Caco-2 (cell line): ENCODE measurements at regions of chr21 and their contacts with region 1.

Region 1: DNA sequence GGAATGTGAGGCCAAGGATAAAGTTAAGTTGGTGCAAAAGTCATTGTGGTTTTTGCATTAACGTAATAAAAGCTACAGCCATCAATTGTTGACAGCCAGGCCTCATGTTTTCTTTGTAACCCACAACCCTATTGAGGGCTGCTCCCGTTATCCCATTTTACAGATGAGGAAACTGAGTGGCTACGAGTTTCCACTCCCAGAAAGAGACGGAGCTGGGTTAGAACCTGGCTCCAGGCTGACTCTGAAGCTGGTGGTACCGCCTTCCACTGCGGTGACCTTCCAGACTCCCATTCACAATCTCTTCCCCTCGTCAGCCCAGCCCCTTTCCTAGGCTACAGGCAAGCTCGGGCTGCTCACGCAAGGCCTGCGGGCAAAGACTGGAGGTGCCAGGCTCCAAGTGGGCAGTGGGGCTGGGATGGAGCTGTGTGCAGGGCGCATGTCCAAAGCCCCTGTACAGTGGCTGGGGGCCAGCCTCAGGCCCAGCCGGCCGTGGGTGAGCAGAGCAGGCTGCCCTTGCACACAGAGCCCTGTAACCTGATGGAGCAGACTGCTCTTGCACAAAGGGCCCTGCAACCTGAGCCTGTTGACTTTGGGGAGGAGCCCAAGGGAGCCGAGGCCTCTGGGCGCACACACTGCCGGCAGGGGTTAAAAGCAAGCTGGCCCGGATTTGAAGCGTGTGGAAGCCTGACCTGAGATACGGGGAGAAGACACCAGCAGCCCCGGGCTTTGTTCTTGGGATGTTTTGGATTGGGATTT is 97.4 kb upstream of the TMPRSS2 start:
- DNase-seq: peak; percentile 74 to 80
- H3K4me3 ChIP-seq: no peak overlapping the region
- H3K4me3 Mint-ChIP-seq: no peak overlapping the region
- H3K27ac Mint-ChIP-seq: peak overlapping the region; percentile 69
- H3K4me1 ChIP-seq: peaks cover 46% of the 10 kb centered on the region
- H3K4me1 Mint-ChIP-seq: peaks cover 33% of the 10 kb centered on the region
- H3K27me3 ChIP-seq: no peaks in the 10 kb centered on the region
- H3K27me3 Mint-ChIP-seq: no peaks in the 10 kb centered on the region
- CTCF ChIP-seq: no peak

Region 2: DNA sequence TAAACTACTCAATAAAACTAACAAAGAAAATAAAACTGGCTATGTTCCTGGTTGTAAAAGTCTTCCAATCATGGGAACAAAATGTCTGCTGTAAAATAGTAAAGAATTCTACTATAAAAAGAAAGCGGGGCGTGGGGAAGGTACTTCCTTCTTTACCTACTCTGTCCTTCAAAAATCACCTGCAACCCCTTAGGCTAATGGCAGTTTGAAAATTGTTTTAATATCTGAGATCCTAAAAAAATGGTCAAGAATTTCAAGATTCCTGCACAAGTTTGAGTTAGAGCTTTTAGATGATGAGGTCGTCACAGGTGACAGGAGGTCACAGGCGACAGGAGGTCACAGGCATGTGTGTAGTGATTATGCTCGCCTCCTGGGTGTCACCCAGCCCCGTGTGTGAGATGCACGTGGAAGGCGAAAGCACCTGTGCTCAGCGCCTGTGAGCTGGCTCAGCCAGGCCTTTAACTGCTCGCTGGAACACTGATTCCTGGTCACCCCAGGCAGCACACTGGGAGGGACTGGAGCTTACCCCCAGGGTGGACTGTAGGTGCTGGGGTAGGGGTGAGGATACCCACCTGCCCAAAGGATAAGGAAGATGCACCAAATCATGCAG is 78.8 kb before region 1 on chr21:
- CTCF ChIA-PET with region 1: no interaction called
- POLR2A ChIA-PET with region 1: no interaction called
- intact Hi-C with region 1: loop called (anchors 5 kb)
- DNase-seq: peak in 1 of 2 experiments; percentile 27
- H3K4me3 ChIP-seq: no peak overlapping the region
- H3K4me3 Mint-ChIP-seq: no peak overlapping the region
- H3K27ac Mint-ChIP-seq: peak overlapping the region; percentile 89
- H3K4me1 ChIP-seq: peaks cover 28% of the 10 kb centered on the region
- H3K4me1 Mint-ChIP-seq: peaks cover 15% of the 10 kb centered on the region
- H3K27me3 ChIP-seq: no peaks in the 10 kb centered on the region
- H3K27me3 Mint-ChIP-seq: no peaks in the 10 kb centered on the region
- CTCF ChIP-seq: no peak

Region 3: DNA sequence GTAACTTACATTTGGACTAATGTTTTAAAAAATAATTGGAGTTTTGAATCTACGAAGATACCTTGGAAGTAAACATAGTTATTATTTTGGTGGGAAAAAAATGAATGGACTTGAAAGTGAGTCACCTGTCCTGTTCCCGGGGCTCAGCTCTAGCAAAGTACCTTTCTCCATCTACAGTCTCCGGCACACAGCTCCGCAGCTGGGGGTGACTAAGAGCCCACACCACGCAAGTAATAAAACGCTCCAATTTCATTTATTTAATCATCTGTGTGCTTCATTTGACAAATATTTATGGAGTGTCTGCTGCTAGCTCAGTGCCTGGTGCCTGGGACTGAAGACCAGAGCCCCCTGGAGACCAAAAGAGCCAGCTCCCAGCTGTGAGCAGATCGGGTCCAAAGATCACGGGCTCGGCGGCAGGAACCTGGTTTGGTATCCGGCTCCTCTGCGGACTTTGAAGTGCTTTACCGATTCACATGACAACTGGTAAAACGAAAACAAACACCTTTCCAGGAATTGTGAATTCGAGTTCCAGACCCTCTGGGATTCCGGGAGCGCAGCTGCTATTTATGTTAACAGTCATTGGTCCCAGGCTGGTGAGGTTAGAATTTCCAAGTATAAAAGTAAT is 163.2 kb after region 1 on chr21:
- CTCF ChIA-PET with region 1: interaction called, 61 read pairs
- POLR2A ChIA-PET with region 1: no interaction called
- intact Hi-C with region 1: no loop called
- DNase-seq: peak; percentile 91 to 93
- H3K4me3 ChIP-seq: peak overlapping the region; percentile 90
- H3K4me3 Mint-ChIP-seq: peak overlapping the region; percentile 90
- H3K27ac Mint-ChIP-seq: peak overlapping the region; percentile 94
- H3K4me1 ChIP-seq: peaks cover 40% of the 10 kb centered on the region
- H3K4me1 Mint-ChIP-seq: peaks cover 64% of the 10 kb centered on the region
- H3K27me3 ChIP-seq: no peaks in the 10 kb centered on the region
- H3K27me3 Mint-ChIP-seq: no peaks in the 10 kb centered on the region
- CTCF ChIP-seq: peak; percentile 41 to 68